ENCODE measurements at regions of chr11 and their contacts with region 1.

Region 1: GRCh38 chr11:124194698-124195410 is 11.7 kb downstream of the OR10D3 start:
- DNase-seq: no peak
- ATAC-seq: peak; percentile 83 to 84
- H3K4me3 ChIP-seq: no peak overlapping the region
- H3K27ac ChIP-seq: peak overlapping the region; percentile 44
- H3K4me1 ChIP-seq: no peaks in the 10 kb centered on the region
- H3K27me3 ChIP-seq: no peaks in the 10 kb centered on the region
- CTCF ChIP-seq: peak; percentile 65

Region 2: GRCh38 chr11:124070915-124071635 is 123.8 kb before region 1 on chr11:
- intact Hi-C with region 1: loop called (anchors 10 kb)
- DNase-seq: peak; percentile 57
- ATAC-seq: peak; percentile 67 to 68
- H3K4me3 ChIP-seq: no peak overlapping the region
- H3K27ac ChIP-seq: no peak overlapping the region
- H3K4me1 ChIP-seq: peaks cover 17% of the 10 kb centered on the region
- H3K27me3 ChIP-seq: peaks cover 12% of the 10 kb centered on the region
- CTCF ChIP-seq: peak; percentile 70